Activated T-helper 1 cell treated with anti-CD3 and anti-CD28 coated beads, Interleukin-12 subunit alpha, Interleukin-12 subunit beta, Interleukin-2, Interleukin-4 antibody, amounts not matched to agents 30 ng/mL and 10 ng/mL and 1 ng/mL, durations not matched to agents 14 hours and 24 hours and 36 hours (primary cell): ENCODE measurements at regions of chr9 and their contacts with region 1.

Region 1: GRCh38 chr9:4339357-4339756 is 39.5 kb upstream of the GLIS3 start:
- DNase-seq: peak; percentile 69
- H3K4me3 Mint-ChIP-seq: no peak overlapping the region
- H3K27ac Mint-ChIP-seq: peak overlapping the region; percentile 77
- H3K4me1 Mint-ChIP-seq: peaks cover 10% of the 10 kb centered on the region
- H3K27me3 Mint-ChIP-seq: peaks cover 4% of the 10 kb centered on the region

Region 2: DNA sequence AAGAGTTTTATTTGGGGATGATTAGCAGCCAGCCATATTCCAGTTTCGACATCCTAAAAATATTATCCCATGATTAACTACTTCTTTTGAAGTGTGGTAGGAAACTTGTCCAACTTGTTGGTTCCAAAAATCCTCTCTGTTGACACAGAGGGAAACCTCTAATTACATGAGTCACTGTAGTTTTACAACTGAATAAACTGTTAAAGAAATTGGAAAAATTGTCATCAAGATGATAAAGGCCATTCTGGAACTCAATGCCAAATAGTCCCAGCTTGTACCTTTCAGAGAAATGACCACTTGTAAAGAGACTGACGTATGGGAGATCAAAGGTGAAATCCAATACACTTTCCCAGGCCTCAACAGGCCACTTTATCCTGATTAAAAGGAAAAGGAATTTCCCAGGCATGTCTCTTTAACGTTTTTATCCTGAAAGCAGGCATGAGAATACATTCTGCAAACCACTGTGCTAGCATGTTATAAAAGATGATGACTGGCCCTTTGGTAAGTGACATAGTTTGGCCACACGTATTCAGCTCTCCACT is 301.1 kb before region 1 on chr9:
- intact Hi-C with region 1: no loop called
- DNase-seq: no peak
- H3K4me3 Mint-ChIP-seq: no peak overlapping the region
- H3K27ac Mint-ChIP-seq: no peak overlapping the region
- H3K4me1 Mint-ChIP-seq: no peaks in the 10 kb centered on the region
- H3K27me3 Mint-ChIP-seq: peaks cover 4% of the 10 kb centered on the region

Region 3: GRCh38 chr9:4077499-4078102 is 261.8 kb before region 1 on chr9:
- intact Hi-C with region 1: loop called (anchors 2 kb)
- DNase-seq: peak; percentile 2
- H3K4me3 Mint-ChIP-seq: no peak overlapping the region
- H3K27ac Mint-ChIP-seq: no peak overlapping the region
- H3K4me1 Mint-ChIP-seq: no peaks in the 10 kb centered on the region
- H3K27me3 Mint-ChIP-seq: peaks cover 5% of the 10 kb centered on the region

Region 4: GRCh38 chr9:4117835-4118610 is 221.3 kb before region 1 on chr9:
- intact Hi-C with region 1: loop called (anchors 5 kb)
- DNase-seq: peak; percentile 13
- H3K4me3 Mint-ChIP-seq: no peak overlapping the region
- H3K27ac Mint-ChIP-seq: no peak overlapping the region
- H3K4me1 Mint-ChIP-seq: no peaks in the 10 kb centered on the region
- H3K27me3 Mint-ChIP-seq: no peaks in the 10 kb centered on the region

Region 5: DNA sequence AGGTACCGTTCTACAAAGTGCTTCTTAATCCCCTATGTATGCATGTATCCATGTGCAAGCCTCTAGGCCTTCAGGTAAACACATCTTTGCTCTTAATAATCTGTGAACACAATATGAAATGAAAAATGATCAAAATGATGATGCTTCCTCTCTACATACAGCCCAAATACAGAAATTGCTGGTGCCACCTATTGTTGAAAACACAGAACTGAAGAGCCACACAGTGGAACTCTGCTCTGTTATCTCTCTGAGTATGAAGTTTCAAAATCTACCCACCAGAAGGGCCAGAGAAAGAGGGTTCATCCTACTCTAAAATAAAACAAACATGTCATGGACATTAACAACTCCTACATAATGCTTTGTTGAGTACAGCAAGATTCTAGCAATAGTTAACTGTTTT is 110.8 kb before region 1 on chr9:
- intact Hi-C with region 1: loop called (anchors 2 kb)
- DNase-seq: no peak
- H3K4me3 Mint-ChIP-seq: no peak overlapping the region
- H3K27ac Mint-ChIP-seq: no peak overlapping the region
- H3K4me1 Mint-ChIP-seq: peaks cover 6% of the 10 kb centered on the region
- H3K27me3 Mint-ChIP-seq: peaks cover 7% of the 10 kb centered on the region

Region 6: GRCh38 chr9:4306066-4306775 is 33.1 kb before region 1 on chr9:
- intact Hi-C with region 1: loop called (anchors 2 kb)
- DNase-seq: no peak
- H3K4me3 Mint-ChIP-seq: peak overlapping the region; percentile 40
- H3K27ac Mint-ChIP-seq: peak overlapping the region; percentile 76
- H3K4me1 Mint-ChIP-seq: peaks cover 58% of the 10 kb centered on the region
- H3K27me3 Mint-ChIP-seq: peaks cover 14% of the 10 kb centered on the region

Region 7: DNA sequence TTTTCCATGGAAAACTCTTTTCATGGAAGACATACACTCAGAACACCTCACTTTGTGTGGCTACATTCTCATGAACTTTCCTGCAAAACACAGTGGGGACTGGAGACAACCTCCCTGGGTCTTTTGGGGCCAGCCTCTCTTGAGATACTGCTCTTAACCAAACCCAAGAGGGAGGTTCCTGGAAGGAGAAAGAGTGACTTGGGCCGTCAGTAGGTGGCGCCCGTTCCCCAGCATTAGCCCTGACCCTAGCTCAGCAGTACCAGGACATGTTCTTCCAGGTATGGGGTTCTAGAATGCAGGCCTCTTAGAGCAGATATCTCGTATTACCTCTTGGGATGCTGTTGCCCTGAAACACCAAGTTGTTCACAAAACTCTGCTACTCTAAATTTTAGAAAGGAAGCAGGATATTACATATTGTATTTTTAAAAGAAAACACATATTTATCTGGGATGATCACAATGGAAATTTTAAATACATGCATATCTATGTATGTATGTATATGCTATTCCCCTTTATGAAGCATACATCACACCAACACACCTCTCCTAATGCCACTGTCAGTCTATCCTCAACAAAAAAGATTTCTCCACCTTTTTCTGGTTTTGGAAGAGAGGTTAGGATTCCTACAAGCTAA is 23.7 kb before region 1 on chr9:
- intact Hi-C with region 1: loop called (anchors 1 kb)
- DNase-seq: peak; percentile 60
- H3K4me3 Mint-ChIP-seq: no peak overlapping the region
- H3K27ac Mint-ChIP-seq: no peak overlapping the region
- H3K4me1 Mint-ChIP-seq: peaks cover 5% of the 10 kb centered on the region
- H3K27me3 Mint-ChIP-seq: peaks cover 13% of the 10 kb centered on the region